ENCODE measurements at regions of chr12 and their contacts with region 1.

Region 1: GRCh38 chr12:80044694-80045046 is 54.7 kb upstream of the OTOGL start:
- DNase-seq: peak; percentile 84
- H3K4me3 ChIP-seq: no peak overlapping the region
- H3K27ac ChIP-seq: peak overlapping the region; percentile 41
- H3K4me1 ChIP-seq: peaks cover 17% of the 10 kb centered on the region
- H3K27me3 ChIP-seq: no peaks in the 10 kb centered on the region
- CTCF ChIP-seq: no peak

Region 2: DNA sequence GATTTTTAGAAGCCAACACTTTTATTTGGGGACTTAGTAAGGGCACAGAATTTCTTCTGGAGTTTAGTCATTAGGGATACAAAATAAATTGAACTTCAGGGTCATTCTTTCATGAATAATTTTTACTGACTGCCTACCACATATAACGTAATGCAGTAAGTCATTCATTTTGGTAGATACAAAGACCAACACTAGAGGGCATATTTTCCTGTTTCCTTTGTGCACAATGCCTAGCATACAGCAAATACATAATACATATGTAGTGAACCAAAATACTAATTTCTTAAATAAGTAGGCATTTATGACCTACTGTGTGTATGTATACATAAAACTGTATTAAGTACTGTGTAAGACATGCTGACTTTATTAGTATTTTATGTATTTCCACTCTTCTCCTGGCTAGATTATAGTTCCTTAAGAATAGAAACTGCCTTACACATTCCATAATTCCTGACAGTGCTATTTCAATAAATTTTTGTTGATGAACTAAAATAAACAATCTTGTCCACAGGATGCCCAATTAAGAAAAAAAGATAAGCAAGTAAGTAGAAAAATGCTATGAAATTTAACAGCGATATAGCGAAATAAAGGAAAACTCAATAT is 157.7 kb before region 1 on chr12:
- CTCF ChIA-PET with region 1: no interaction called
- dilution Hi-C with region 1: no loop called
- in situ Hi-C with region 1: no loop called
- intact Hi-C with region 1: loop called (anchors 10 kb)
- DNase-seq: peak; percentile 41
- H3K4me3 ChIP-seq: no peak overlapping the region
- H3K27ac ChIP-seq: no peak overlapping the region
- H3K4me1 ChIP-seq: peaks cover 16% of the 10 kb centered on the region
- H3K27me3 ChIP-seq: no peaks in the 10 kb centered on the region
- CTCF ChIP-seq: peak; percentile 63 to 72

Measured in mammary epithelial cell (primary cell).